H1 (cell line): ENCODE measurements at regions of chr17 and their contacts with region 1.

Region 1: GRCh38 chr17:46002311-46002972 is 3.4 kb downstream of the STH start:
- DNase-seq: peak; percentile 36 to 91
- H3K4me3 ChIP-seq: no peak overlapping the region
- H3K27ac ChIP-seq: no peak overlapping the region
- H3K4me1 ChIP-seq: no peaks in the 10 kb centered on the region; a peak in 1 of 7 replicates
- H3K27me3 ChIP-seq: no peaks in the 10 kb centered on the region
- CTCF ChIP-seq: peak; percentile 69 to 91 (median 90)
- EP300 ChIP-seq: no peak
- POLR2A ChIP-seq: no peak
- RAD21 ChIP-seq: peak; percentile 92

Region 2: GRCh38 chr17:45894022-45894784 is 108.2 kb before region 1 on chr17 and contains the start of gene MAPT:
- CTCF ChIA-PET with region 1: interaction called, 11 read pairs
- POLR2A ChIA-PET with region 1: no interaction called
- DNase-seq: peak; percentile 84 to 96
- H3K4me3 ChIP-seq: peak within 1 kb of the TSS; percentile 41 to 74 (median 67)
- H3K27ac ChIP-seq: no peak within 1 kb of the TSS
- H3K4me1 ChIP-seq: peaks cover 0 to 20% (median 9%) of the 10 kb centered on the region in 4 experiments; a peak in 6 of 7 replicates
- H3K27me3 ChIP-seq: peaks cover 39 to 60% (median 57%) of the 10 kb centered on the region in 4 experiments
- CTCF ChIP-seq: peak; percentile 84 to 90 (median 87)
- EP300 ChIP-seq: 0 out of 3 replicates have a peak, but pooled peaks of 1 of the 2 experiments have one; percentile 2
- POLR2A ChIP-seq: peak in 1 of 2 experiments; percentile 64; a peak in 2 of 3 replicates
- RAD21 ChIP-seq: peak; percentile 31 to 53
- total RNA-seq, gene MAPT: 1.7 and 2.4 TPM in 2 replicates

Region 3: GRCh38 chr17:45963889-45964288 is 38.6 kb before region 1 on chr17:
- CTCF ChIA-PET with region 1: no interaction called
- POLR2A ChIA-PET with region 1: no interaction called
- DNase-seq: no peak
- H3K4me3 ChIP-seq: no peak overlapping the region
- H3K27ac ChIP-seq: no peak overlapping the region
- H3K4me1 ChIP-seq: no peaks in the 10 kb centered on the region
- H3K27me3 ChIP-seq: peaks cover 0 to 2% (median 0%) of the 10 kb centered on the region in 4 experiments; a peak in 1 of 7 replicates
- CTCF ChIP-seq: no peak
- EP300 ChIP-seq: no peak
- POLR2A ChIP-seq: no peak
- RAD21 ChIP-seq: no peak

Region 4: DNA sequence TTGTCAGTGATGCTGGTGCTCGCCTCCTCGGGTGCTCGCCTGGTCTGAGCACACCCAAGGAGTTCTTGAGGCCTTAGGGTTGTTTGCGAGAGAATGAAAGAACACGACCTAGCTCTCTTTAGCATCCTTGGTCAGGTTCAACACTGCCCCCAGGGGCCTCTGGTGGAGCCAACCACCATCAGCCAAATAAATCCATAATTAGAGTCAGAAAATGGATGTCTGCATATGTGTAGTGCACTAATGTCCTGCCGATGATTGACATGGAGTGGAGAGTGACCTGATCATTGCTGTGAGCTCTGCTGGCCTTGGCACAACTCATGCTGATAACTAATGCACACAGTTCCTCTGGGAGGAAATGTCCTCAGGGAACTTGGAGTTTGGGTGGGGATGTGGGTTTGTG is 11.6 kb before region 1 on chr17:
- CTCF ChIA-PET with region 1: interaction called, 25 read pairs
- POLR2A ChIA-PET with region 1: interaction called, 3 read pairs
- DNase-seq: no peak
- H3K4me3 ChIP-seq: no peak overlapping the region
- H3K27ac ChIP-seq: no peak overlapping the region
- H3K4me1 ChIP-seq: peaks cover 0 to 9% (median 4%) of the 10 kb centered on the region in 4 experiments; a peak in 5 of 7 replicates
- H3K27me3 ChIP-seq: peaks cover 0 to 2% (median 0%) of the 10 kb centered on the region in 4 experiments; a peak in 1 of 7 replicates
- CTCF ChIP-seq: peak in 1 of 3 experiments; percentile 32; a peak in 1 of 4 replicates
- EP300 ChIP-seq: no peak
- POLR2A ChIP-seq: no peak
- RAD21 ChIP-seq: no peak

Region 5: GRCh38 chr17:46026166-46027047 is 24.0 kb after region 1 on chr17:
- CTCF ChIA-PET with region 1: interaction called, 12 read pairs
- POLR2A ChIA-PET with region 1: no interaction called
- DNase-seq: no peak
- H3K4me3 ChIP-seq: no peak overlapping the region
- H3K27ac ChIP-seq: 0 out of 2 replicates have a peak overlapping the region, but pooled peaks have one; percentile 15
- H3K4me1 ChIP-seq: peaks cover 3 to 19% (median 6%) of the 10 kb centered on the region in 4 experiments
- H3K27me3 ChIP-seq: no peaks in the 10 kb centered on the region
- CTCF ChIP-seq: peak; percentile 10 to 41 (median 17); a peak in 3 of 4 replicates
- EP300 ChIP-seq: no peak
- POLR2A ChIP-seq: no peak
- RAD21 ChIP-seq: no peak; a peak in 1 of 4 replicates

Region 6: DNA sequence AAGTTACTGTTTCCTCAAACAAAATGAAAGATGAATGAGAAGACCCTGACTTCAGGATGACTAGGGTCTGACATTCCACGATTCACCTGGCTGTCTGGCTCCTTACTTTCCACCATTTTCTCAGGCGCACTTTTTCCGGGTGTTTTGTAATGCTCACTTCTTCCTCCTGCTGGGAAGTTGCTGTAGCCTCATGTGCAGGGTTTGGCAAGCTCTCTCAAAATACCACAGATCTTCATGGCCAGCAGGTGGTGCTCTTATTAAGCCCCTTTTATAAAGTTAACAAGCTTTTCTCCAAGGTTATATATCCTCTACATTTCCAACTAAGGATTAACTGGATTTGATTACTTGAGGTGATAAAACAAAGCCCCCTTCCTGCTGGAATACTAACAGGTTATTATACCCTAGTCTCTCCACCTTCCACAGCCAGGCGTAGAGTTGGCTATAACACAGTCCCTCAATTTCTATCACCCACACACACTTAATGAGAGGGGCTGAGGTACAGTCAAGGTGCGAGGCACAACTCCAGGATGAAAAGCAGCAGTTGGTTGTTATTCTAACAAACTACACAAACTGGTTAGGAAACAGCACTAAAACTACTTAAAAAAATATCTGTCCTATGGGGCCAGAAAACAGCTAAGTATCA is 42.0 kb after region 1 on chr17:
- CTCF ChIA-PET with region 1: interaction called, 15 read pairs
- POLR2A ChIA-PET with region 1: no interaction called
- DNase-seq: peak in 1 of 2 experiments; percentile 38
- H3K4me3 ChIP-seq: no peak overlapping the region
- H3K27ac ChIP-seq: no peak overlapping the region
- H3K4me1 ChIP-seq: no peaks in the 10 kb centered on the region
- H3K27me3 ChIP-seq: no peaks in the 10 kb centered on the region
- CTCF ChIP-seq: peak; percentile 27 to 96 (median 89)
- EP300 ChIP-seq: no peak
- POLR2A ChIP-seq: no peak
- RAD21 ChIP-seq: peak; percentile 58 to 70